IMR-90 (cell line): ENCODE measurements at regions of chr12 and their contacts with region 1.

Region 1: GRCh38 chr12:77010691-77011548 is 54.4 kb downstream of the E2F7 start:
- DNase-seq: peak; percentile 89
- ATAC-seq: peak; percentile 96
- H3K4me3 ChIP-seq: no peak overlapping the region
- H3K27ac ChIP-seq: no peak overlapping the region; the same call in 1 of the 2 replicates
- H3K4me1 ChIP-seq: peaks cover 5% of the 10 kb centered on the region
- H3K27me3 ChIP-seq: no peaks in the 10 kb centered on the region
- CTCF ChIP-seq: peak; percentile 96
- POLR2A ChIP-seq: peak; percentile 48; the same call in 1 of the 2 replicates
- RAD21 ChIP-seq: peak; percentile 97

Region 2: DNA sequence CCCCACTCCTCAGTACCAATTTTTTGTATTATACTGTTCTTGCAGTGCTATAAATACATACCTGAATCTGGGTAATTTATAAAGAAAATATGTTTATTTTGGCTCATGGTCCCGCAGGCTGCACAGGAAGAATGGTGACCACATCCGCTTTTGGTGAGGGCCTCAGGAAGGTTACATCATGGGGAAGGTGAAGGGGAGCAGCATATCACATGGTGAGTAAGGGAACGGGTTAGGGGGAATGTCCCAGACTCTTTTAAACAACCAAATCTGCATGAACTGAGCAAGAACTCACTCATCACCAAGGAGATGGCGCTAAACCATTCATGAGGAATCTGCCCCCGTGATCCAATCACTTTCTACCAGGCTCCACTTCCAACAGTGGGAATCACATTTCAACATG is 491.4 kb before region 1 on chr12:
- CTCF ChIA-PET with region 1: no interaction called
- POLR2A ChIA-PET with region 1: no interaction called
- dilution Hi-C with region 1: no loop called
- in situ Hi-C with region 1: no loop called
- intact Hi-C with region 1: no loop called
- DNase-seq: no peak
- ATAC-seq: no peak
- H3K4me3 ChIP-seq: no peak overlapping the region
- H3K27ac ChIP-seq: no peak overlapping the region
- H3K4me1 ChIP-seq: no peaks in the 10 kb centered on the region
- H3K27me3 ChIP-seq: no peaks in the 10 kb centered on the region
- CTCF ChIP-seq: no peak
- POLR2A ChIP-seq: no peak
- RAD21 ChIP-seq: no peak

Region 3: DNA sequence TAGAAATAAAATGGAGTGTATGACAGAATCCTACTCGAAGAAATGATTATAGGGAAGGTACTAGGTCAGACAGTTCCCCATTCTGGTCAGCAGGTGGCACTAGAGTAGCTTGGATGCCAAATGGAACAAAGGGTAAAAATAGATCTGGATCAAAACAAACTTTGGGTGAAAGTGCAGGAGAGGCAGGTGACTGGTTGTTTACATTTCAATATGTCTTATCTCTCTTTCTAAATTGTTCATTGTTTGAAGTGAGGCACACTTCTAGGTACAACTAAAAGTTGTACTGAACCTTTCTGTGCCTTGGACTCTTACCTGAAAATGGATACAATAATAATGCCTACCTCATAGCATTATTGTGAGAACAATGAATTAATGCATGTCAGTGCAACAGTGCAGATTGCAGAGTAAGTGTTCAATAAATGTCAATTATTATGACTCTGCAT is 389.3 kb before region 1 on chr12:
- CTCF ChIA-PET with region 1: interaction called, 10 read pairs
- POLR2A ChIA-PET with region 1: no interaction called
- dilution Hi-C with region 1: no loop called
- in situ Hi-C with region 1: loop called (anchors 5 kb)
- intact Hi-C with region 1: loop called (anchors 1 kb)
- DNase-seq: peak; percentile 72
- ATAC-seq: peak; percentile 81
- H3K4me3 ChIP-seq: no peak overlapping the region
- H3K27ac ChIP-seq: no peak overlapping the region
- H3K4me1 ChIP-seq: peaks cover 5% of the 10 kb centered on the region; the same call in 1 of the 2 replicates
- H3K27me3 ChIP-seq: no peaks in the 10 kb centered on the region
- CTCF ChIP-seq: peak; percentile 97
- POLR2A ChIP-seq: peak; percentile 55; the same call in 1 of the 2 replicates
- RAD21 ChIP-seq: peak; percentile 100

Region 4: DNA sequence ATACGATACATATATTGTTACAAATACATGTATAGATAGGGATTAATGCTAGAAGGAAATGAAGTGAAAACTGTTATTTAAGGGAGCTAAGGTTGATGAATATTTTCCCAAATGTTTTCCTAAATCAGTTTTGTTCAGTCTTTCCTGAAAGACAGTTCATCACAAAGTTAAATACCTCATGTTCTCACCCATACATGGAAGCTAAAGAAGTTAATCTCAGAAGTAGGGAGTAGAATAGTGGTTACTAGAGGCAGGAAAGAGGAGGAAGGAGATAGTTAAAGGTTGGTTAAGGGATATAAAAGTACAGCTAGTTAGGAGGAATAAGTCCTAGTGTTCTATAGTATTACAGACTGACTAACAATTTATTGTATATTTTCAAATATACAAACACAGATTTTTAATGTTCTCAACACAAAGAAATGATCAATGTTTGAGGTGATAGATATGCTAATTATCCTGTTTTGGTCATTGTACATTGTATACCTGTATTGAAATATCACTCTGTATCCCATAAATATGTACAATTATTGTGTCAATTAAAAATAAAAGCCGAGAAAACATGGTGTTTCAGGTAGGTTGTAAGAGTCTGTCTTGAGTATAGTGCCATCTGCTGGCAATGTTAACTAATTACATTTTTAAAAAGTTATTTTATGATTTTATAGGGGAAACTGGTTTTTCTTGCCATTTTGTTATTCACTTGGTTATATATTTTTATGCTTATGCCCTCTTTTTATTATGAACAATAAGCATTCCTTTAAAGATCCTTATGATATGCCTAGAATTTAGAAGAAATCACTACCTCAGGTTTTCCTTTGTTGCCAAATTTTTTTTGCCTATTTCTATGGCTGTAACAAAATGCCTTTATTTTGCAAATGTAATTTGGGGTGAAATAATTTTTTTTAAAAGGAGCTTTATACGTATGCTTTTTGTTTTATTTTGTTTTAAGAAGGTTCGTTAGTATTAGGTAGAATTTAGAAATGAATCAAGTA is 220.1 kb before region 1 on chr12:
- CTCF ChIA-PET with region 1: interaction called, 5 read pairs
- POLR2A ChIA-PET with region 1: no interaction called
- dilution Hi-C with region 1: no loop called
- in situ Hi-C with region 1: no loop called
- intact Hi-C with region 1: loop called (anchors 1 kb)
- DNase-seq: peak; percentile 37
- ATAC-seq: no peak
- H3K4me3 ChIP-seq: no peak overlapping the region
- H3K27ac ChIP-seq: no peak overlapping the region
- H3K4me1 ChIP-seq: no peaks in the 10 kb centered on the region; the same call in 1 of the 2 replicates
- H3K27me3 ChIP-seq: no peaks in the 10 kb centered on the region
- CTCF ChIP-seq: peak; percentile 72
- POLR2A ChIP-seq: no peak
- RAD21 ChIP-seq: peak; percentile 84

Region 5: DNA sequence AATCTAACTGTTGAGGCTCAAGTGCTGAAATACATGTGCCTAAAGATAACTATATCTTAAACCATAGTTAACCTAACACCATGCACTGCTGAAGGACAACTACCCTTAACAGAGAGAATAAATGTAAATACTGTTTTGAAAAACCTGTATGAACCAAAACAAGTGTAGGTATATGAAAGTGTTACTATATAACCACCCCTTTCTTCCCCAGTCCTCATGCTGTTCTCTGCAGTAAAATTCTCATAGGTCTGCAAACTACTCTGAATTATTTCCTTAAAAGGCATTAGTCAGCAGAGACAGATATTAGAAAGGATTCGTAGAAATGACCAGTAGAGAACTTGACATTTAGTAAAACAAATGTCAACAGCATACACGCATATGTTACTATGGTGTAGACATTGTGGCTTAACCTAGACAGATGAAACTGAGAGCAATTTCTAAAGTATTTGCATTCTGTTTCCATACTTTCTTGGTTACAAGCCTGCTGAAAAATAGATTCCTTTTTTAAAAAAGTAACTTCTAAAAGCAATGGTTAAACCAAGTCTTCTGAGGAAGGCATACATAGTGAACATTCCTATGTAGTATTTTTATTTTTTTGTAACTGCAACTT is 146.0 kb before region 1 on chr12:
- CTCF ChIA-PET with region 1: interaction called, 4 read pairs
- POLR2A ChIA-PET with region 1: no interaction called
- dilution Hi-C with region 1: no loop called
- in situ Hi-C with region 1: no loop called
- intact Hi-C with region 1: loop called (anchors 5 kb)
- DNase-seq: peak; percentile 65
- ATAC-seq: peak; percentile 30
- H3K4me3 ChIP-seq: no peak overlapping the region
- H3K27ac ChIP-seq: no peak overlapping the region
- H3K4me1 ChIP-seq: peaks cover 17% of the 10 kb centered on the region
- H3K27me3 ChIP-seq: no peaks in the 10 kb centered on the region
- CTCF ChIP-seq: no peak
- POLR2A ChIP-seq: no peak
- RAD21 ChIP-seq: no peak

Region 6: GRCh38 chr12:77023501-77023900 is 12.6 kb after region 1 on chr12:
- CTCF ChIA-PET with region 1: interaction called, 11 read pairs
- POLR2A ChIA-PET with region 1: no interaction called
- dilution Hi-C with region 1: no loop called
- in situ Hi-C with region 1: no loop called
- intact Hi-C with region 1: no loop called
- DNase-seq: no peak
- ATAC-seq: no peak
- H3K4me3 ChIP-seq: no peak overlapping the region
- H3K27ac ChIP-seq: no peak overlapping the region
- H3K4me1 ChIP-seq: no peaks in the 10 kb centered on the region
- H3K27me3 ChIP-seq: no peaks in the 10 kb centered on the region
- CTCF ChIP-seq: no peak
- POLR2A ChIP-seq: no peak
- RAD21 ChIP-seq: no peak

Region 7: GRCh38 chr12:77152623-77153193 is 141.8 kb after region 1 on chr12:
- CTCF ChIA-PET with region 1: no interaction called
- POLR2A ChIA-PET with region 1: no interaction called
- dilution Hi-C with region 1: no loop called
- in situ Hi-C with region 1: no loop called
- intact Hi-C with region 1: no loop called
- DNase-seq: peak; percentile 56
- ATAC-seq: peak; percentile 54; the same call in 1 of the 2 replicates
- H3K4me3 ChIP-seq: no peak overlapping the region
- H3K27ac ChIP-seq: no peak overlapping the region
- H3K4me1 ChIP-seq: no peaks in the 10 kb centered on the region
- H3K27me3 ChIP-seq: no peaks in the 10 kb centered on the region
- CTCF ChIP-seq: peak; percentile 65
- POLR2A ChIP-seq: no peak
- RAD21 ChIP-seq: peak; percentile 76